T-cell (primary cell): ENCODE measurements at regions of chr1 and their contacts with region 1.

Region 1: GRCh38 chr1:115289940-115290339 is 48.1 kb downstream of the NGF start:
- DNase-seq: no peak
- ATAC-seq: no peak
- H3K4me3 ChIP-seq: no peak overlapping the region
- H3K4me3 Mint-ChIP-seq: no peak overlapping the region
- H3K27ac ChIP-seq: no peak overlapping the region
- H3K27ac Mint-ChIP-seq: no peak overlapping the region
- H3K4me1 ChIP-seq: no peaks in the 10 kb centered on the region
- H3K4me1 Mint-ChIP-seq: no peaks in the 10 kb centered on the region
- H3K27me3 ChIP-seq: peaks cover 2 to 17% of the 10 kb centered on the region in 2 experiments
- H3K27me3 Mint-ChIP-seq: peaks cover 2 to 15% of the 10 kb centered on the region in 2 donors

Region 2: DNA sequence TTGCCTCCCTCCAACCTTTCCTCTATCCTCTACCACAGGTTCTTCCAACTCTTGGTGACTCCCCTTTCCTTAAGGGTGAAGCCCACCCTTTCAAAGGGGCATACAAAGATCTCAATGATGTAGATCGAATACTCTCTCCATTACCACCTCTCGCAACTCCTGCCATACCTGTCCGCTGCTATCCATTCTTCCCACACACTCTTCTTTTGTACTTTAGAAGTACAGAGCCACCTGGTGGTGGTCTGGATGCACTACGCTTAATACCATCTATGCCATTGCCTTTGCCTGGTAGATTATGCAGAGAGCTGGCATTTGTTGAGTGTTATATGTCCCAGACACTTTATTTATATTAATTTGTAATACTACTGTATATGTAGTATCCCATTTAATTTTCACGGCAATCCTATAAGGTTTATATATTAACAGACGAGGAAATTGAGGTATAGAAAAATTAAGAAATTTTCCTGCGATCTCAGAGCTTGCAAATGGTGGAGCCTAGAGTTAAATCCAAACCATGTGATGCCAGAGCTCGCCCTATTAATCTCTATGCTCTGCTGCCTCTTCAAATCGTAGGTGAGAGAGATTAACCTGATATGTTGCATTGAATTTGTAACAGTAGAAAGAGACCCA is 237.4 kb before region 1 on chr1:
- CTCF ChIA-PET with region 1: no interaction called
- POLR2A ChIA-PET with region 1: no interaction called
- DNase-seq: peak in 32 of 35 experiments; percentile 18 to 75 (median 48)
- ATAC-seq: peak; percentile 75 to 86 (median 84)
- H3K4me3 ChIP-seq: no peak overlapping the region
- H3K4me3 Mint-ChIP-seq: no peak overlapping the region
- H3K27ac ChIP-seq: no peak overlapping the region
- H3K27ac Mint-ChIP-seq: no peak overlapping the region
- H3K4me1 ChIP-seq: peaks cover 0 to 4% of the 10 kb centered on the region in 2 experiments
- H3K4me1 Mint-ChIP-seq: peaks cover 0 to 7% (median 2%) of the 10 kb centered on the region in 3 donors
- H3K27me3 ChIP-seq: no peaks in the 10 kb centered on the region
- H3K27me3 Mint-ChIP-seq: no peaks in the 10 kb centered on the region

Region 3: GRCh38 chr1:115313182-115313581 is 23.2 kb after region 1 on chr1:
- CTCF ChIA-PET with region 1: interaction called in 1 of 2 experiments, 12 read pairs
- POLR2A ChIA-PET with region 1: no interaction called
- DNase-seq: no peak
- ATAC-seq: no peak
- H3K4me3 ChIP-seq: no peak overlapping the region
- H3K4me3 Mint-ChIP-seq: no peak overlapping the region
- H3K27ac ChIP-seq: no peak overlapping the region
- H3K27ac Mint-ChIP-seq: no peak overlapping the region
- H3K4me1 ChIP-seq: no peaks in the 10 kb centered on the region
- H3K4me1 Mint-ChIP-seq: no peaks in the 10 kb centered on the region
- H3K27me3 ChIP-seq: peaks cover 0 to 5% of the 10 kb centered on the region in 2 experiments
- H3K27me3 Mint-ChIP-seq: peaks cover 2 to 19% of the 10 kb centered on the region in 2 donors